Spleen (tissue), 13 donors: ENCODE measurements at regions of chr9 and their contacts with region 1.

Region 1: GRCh38 chr9:37333288-37333687 is 89.2 kb upstream of the GRHPR start:
- DNase-seq: no peak
- H3K4me3 ChIP-seq: no peak overlapping the region
- H3K27ac ChIP-seq: peak overlapping the region in 2 of 8 donors; percentile 11
- H3K4me1 ChIP-seq: peaks cover 3 to 67% (median 16%) of the 10 kb centered on the region in 6 donors
- H3K27me3 ChIP-seq: no peaks in the 10 kb centered on the region
- CTCF ChIP-seq: no peak
- POLR2A ChIP-seq: no peak

Region 2: GRCh38 chr9:36873247-36873875 is 459.9 kb before region 1 on chr9:
- intact Hi-C with region 1: loop called (anchors 10 kb)
- DNase-seq: peak; percentile 90
- H3K4me3 ChIP-seq: no peak overlapping the region
- H3K27ac ChIP-seq: peak overlapping the region in 1 of 8 donors; percentile 49
- H3K4me1 ChIP-seq: peaks cover 0 to 40% (median 7%) of the 10 kb centered on the region in 6 donors
- H3K27me3 ChIP-seq: peaks cover 0 to 8% (median 0%) of the 10 kb centered on the region in 7 donors
- CTCF ChIP-seq: peak; percentile 69 to 91 (median 81)
- POLR2A ChIP-seq: no peak

Region 3: DNA sequence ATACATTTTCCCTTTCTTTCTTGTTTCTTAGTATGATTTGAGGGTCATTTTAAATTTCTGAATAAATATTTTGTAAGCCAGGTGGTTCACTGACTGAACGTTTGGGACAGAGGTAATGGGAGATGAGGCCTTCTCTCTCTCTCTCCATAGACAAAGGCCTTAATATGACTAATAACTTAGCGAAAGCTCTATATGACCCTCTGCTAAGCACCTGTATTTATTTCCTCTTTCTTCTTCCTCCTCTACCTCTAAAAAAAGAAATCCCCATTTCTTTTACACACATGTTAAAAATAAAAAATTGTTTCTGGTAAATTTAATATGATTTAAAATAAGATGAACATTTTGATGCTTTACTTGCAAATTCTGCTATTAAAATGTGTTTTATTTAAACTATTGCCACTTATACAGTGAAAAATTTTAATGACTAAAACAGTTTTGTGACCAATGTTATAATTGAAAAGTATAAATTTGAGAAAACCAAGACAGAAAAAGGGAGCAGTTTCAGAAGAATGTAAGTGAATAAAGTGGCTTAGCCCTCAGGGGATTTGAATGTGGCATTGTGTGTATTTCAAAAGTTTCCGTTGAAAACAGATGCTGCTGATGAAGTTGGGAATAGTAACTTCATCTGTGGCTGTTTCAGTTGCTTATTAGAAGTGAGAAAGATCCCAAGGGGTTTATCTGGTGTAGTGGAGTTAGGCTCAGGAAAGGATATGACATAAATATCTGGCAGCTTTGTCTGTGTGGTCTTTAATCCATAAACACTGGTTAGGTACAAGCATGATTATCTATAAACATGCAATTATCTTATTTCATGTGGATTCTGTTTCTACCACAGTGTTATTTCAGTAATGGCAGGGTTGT is 39.4 kb before region 1 on chr9:
- intact Hi-C with region 1: no loop called
- DNase-seq: no peak
- H3K4me3 ChIP-seq: no peak overlapping the region
- H3K27ac ChIP-seq: peak overlapping the region in 7 of 8 donors; percentile 29 to 82 (median 58)
- H3K4me1 ChIP-seq: peaks cover 7 to 95% (median 52%) of the 10 kb centered on the region in 6 donors
- H3K27me3 ChIP-seq: no peaks in the 10 kb centered on the region
- CTCF ChIP-seq: no peak
- POLR2A ChIP-seq: no peak